Right ventricle myocardium inferior (tissue), 1 donor: ENCODE measurements at regions of chr15 and their contacts with region 1.

Region 1: GRCh38 chr15:98421419-98422129 is 226.8 kb upstream of the IGF1R start:
- DNase-seq: peak; percentile 85
- ATAC-seq: peak; percentile 82

Region 2: DNA sequence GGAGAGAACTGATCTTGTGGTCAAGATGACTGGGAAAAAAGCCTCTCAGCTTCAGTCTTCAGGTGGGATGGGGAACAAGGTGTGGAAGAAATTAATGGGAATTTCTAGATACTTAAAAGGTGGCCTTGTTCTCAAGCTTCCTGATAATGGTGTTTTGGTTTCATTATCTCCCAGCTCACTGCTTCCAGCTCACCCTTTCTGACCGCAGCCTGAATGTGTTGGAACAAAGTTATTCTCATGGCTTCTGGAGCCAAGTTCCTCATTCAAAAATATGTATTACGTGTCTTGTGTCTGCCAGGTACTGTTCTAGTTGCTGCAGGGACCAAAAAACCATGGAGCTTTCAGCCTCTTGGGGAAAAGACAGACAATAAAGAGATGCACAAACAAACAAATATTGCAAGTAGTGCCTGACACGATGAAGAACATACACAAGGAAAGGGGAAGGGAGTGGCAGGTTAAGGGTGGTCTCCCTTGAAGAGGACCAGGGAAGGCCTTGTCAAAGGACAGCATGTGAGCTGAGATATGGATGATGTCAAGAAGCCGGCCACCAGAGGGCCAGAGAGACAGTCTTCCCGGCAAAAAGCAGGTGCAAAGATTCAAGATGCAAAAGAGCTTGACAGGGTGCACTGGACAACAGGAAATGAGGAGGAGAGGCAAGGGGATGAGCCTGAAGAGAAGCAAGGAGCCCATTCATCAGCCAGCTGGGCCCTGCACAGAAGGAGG is 425.5 kb before region 1 on chr15:
- intact Hi-C with region 1: no loop called
- DNase-seq: no peak
- ATAC-seq: no peak

Region 3: DNA sequence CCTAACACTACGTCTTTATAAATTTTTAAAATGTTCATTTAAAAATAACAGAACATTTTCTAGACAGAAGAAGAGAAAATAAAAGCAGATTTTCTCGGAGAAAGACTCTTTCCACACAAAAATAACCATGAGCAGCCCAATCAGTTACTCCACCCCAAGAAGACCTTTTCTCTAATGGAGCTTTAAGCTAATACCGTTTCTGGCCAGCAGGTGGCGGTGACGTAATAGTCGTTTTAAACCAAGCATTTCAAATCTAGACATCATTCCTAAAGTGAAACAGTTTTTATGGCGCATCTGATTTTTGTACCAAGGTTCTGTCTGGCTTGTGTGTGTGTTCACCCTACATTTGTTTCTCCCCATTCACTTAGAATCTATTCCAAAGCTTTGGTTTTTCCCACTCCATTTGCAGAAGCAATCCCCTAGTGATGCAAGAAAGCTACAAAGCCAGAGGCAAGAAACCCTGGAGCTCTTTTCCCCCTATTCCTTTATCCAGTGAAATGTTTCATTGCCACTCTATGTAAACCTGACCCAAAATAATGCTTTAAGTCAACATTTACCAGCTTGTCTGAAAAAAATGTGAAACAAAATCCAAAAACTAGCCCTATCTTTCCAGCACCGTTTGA is 109.9 kb before region 1 on chr15:
- intact Hi-C with region 1: loop called (anchors 1 kb)
- DNase-seq: peak; percentile 74
- ATAC-seq: no peak

Region 4: GRCh38 chr15:98363416-98363815 is 58.2 kb before region 1 on chr15:
- intact Hi-C with region 1: no loop called
- DNase-seq: no peak
- ATAC-seq: no peak